ENCODE measurements at regions of chr16 and their contacts with region 1.

Region 1: GRCh38 chr16:67672739-67673662 is 6.4 kb downstream of the C16orf86 start:
- H3K4me3 Mint-ChIP-seq: no peak overlapping the region
- H3K27ac Mint-ChIP-seq: peak overlapping the region; percentile 88
- H3K4me1 Mint-ChIP-seq: peaks cover 54% of the 10 kb centered on the region
- H3K27me3 Mint-ChIP-seq: no peaks in the 10 kb centered on the region

Region 2: GRCh38 chr16:67490335-67491096 is 182.5 kb before region 1 on chr16:
- intact Hi-C with region 1: no loop called
- H3K4me3 Mint-ChIP-seq: peak overlapping the region; percentile 39
- H3K27ac Mint-ChIP-seq: peak overlapping the region; percentile 88
- H3K4me1 Mint-ChIP-seq: peaks cover 71% of the 10 kb centered on the region
- H3K27me3 Mint-ChIP-seq: no peaks in the 10 kb centered on the region

Region 3: GRCh38 chr16:67641779-67642708 is 31.0 kb before region 1 on chr16:
- intact Hi-C with region 1: no loop called
- H3K4me3 Mint-ChIP-seq: no peak overlapping the region
- H3K27ac Mint-ChIP-seq: no peak overlapping the region
- H3K4me1 Mint-ChIP-seq: no peaks in the 10 kb centered on the region
- H3K27me3 Mint-ChIP-seq: peaks cover 26% of the 10 kb centered on the region

Region 4: GRCh38 chr16:67703626-67704025 is 30.6 kb after region 1 on chr16:
- intact Hi-C with region 1: no loop called
- H3K4me3 Mint-ChIP-seq: no peak overlapping the region
- H3K27ac Mint-ChIP-seq: no peak overlapping the region
- H3K4me1 Mint-ChIP-seq: no peaks in the 10 kb centered on the region
- H3K27me3 Mint-ChIP-seq: no peaks in the 10 kb centered on the region

Region 5: GRCh38 chr16:67719048-67719777 is 46.2 kb after region 1 on chr16 and contains the start of gene GFOD2:
- intact Hi-C with region 1: loop called (anchors 5 kb)
- H3K4me3 Mint-ChIP-seq: peak within 1 kb of the TSS; percentile 98
- H3K27ac Mint-ChIP-seq: peak within 1 kb of the TSS; percentile 96
- H3K4me1 Mint-ChIP-seq: peaks cover 37% of the 10 kb centered on the region
- H3K27me3 Mint-ChIP-seq: no peaks in the 10 kb centered on the region

Region 6: GRCh38 chr16:67865316-67865715 is 192.3 kb after region 1 on chr16:
- intact Hi-C with region 1: loop called (anchors 1 kb)
- H3K4me3 Mint-ChIP-seq: no peak overlapping the region
- H3K27ac Mint-ChIP-seq: no peak overlapping the region
- H3K4me1 Mint-ChIP-seq: peaks cover 24% of the 10 kb centered on the region
- H3K27me3 Mint-ChIP-seq: no peaks in the 10 kb centered on the region

Region 7: DNA sequence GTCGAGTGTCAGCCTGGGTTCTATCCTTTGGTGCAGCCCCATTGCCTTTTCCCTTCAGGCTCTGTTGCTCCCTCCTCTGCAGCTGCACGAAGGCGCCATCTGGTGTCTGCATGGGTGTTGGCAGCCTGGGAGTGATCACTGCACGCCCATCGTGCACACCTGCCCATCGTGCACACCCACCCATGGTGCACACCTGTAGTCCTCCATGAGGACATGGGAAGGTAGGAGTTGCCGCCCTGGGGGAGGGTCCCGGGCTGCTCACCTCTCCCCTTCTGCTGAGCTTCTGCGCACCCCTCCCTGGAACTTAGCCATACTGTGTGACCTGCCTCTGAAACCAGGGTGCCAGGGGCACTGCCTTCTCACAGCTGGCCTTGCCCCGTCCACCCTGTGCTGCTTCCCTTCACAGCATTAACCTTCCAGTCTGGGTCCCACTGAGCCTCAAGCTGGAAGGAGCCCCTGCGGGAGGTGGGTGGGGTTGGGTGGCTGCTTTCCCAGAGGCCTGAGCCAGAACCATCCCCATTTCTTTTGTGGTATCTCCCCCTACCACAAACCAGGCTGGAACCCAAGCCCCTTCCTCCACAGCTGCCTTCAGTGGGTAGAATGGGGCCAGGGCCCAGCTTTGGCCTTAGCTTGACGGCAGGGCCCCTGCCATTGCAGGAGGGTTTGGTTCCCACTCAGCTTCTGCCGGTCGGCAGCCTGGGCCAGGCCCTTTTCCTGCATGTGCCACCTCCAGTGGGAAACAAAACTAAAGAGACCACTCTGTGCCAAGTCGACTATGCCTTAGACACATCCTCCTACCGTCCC is 255.8 kb after region 1 on chr16:
- intact Hi-C with region 1: loop called (anchors 2 kb)
- H3K4me3 Mint-ChIP-seq: no peak overlapping the region
- H3K27ac Mint-ChIP-seq: no peak overlapping the region
- H3K4me1 Mint-ChIP-seq: peaks cover 2% of the 10 kb centered on the region
- H3K27me3 Mint-ChIP-seq: no peaks in the 10 kb centered on the region

Region 8: GRCh38 chr16:68040507-68041288 is 367.7 kb after region 1 on chr16:
- intact Hi-C with region 1: loop called (anchors 5 kb)
- H3K4me3 Mint-ChIP-seq: no peak overlapping the region
- H3K27ac Mint-ChIP-seq: peak overlapping the region; percentile 62
- H3K4me1 Mint-ChIP-seq: peaks cover 53% of the 10 kb centered on the region
- H3K27me3 Mint-ChIP-seq: no peaks in the 10 kb centered on the region